ENCODE measurements at regions of chr17 and their contacts with region 1.

Region 1: GRCh38 chr17:2786176-2786881 is 9.9 kb upstream of the RAP1GAP2 start:
- DNase-seq: peak; percentile 94 to 95
- ATAC-seq: peak; percentile 89 to 97
- H3K4me3 ChIP-seq: peak overlapping the region; percentile 27
- H3K27ac ChIP-seq: peak overlapping the region; percentile 53; a peak in 4 of 6 replicates
- H3K4me1 ChIP-seq: no peaks in the 10 kb centered on the region
- CTCF ChIP-seq: peak; percentile 92
- EP300 ChIP-seq: no peak
- POLR2A ChIP-seq: no peak
- RAD21 ChIP-seq: peak; percentile 90 to 94

Region 2: DNA sequence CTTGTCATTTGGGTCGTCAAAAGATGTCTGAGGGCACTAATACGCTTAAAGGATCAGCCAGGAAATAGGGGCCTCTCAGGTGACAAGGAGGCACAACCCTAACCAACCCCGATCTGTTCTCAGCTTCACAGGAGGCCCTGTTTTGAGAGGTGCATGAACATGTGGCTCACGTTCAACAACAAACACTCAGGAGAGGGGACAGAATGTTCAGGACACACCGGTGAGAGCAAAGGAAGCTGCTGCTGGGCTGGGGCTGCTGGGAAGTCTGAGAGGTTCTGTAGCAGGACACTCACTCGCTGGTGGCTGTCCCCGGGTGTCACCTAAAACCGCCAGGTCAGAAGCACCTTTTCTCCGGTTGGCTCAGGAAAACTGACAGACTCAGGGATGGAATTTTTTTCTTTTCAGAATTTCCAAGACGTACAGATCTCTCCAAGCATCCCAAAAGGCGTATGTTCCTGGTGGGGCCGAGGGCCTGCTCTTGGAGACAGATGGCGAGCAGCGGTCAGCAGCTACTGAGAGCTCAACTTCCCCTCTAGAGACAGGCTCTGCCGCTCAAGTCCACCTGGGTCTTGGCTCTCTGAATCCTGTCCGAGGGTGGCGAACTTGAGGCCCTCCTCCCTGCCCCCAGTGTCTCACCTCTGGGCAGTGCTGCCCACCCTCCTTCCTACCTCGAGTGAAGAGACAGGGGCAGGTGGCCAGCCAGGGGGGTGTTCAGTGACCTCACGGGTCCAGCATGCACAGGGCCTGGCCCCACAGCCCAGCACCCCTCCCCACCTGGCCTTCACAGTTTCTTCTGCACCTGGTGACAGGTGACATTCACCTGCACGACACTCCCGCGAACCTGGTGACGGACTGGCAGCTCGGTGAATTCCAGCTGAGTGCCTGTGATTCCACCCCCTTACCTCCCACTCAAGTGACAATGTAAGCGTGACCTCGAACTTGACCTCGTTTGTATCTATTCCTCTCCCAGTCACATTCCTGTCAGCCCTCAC is 97.7 kb before region 1 on chr17:
- CTCF ChIA-PET with region 1: no interaction called
- POLR2A ChIA-PET with region 1: no interaction called
- DNase-seq: no peak
- ATAC-seq: peak; percentile 7 to 8; a peak in 5 of 6 replicates
- H3K4me3 ChIP-seq: no peak overlapping the region
- H3K27ac ChIP-seq: peak overlapping the region in 1 of 2 experiments; percentile 29; a peak in 1 of 6 replicates
- H3K4me1 ChIP-seq: peaks cover 9% of the 10 kb centered on the region
- CTCF ChIP-seq: no peak
- EP300 ChIP-seq: no peak
- POLR2A ChIP-seq: no peak
- RAD21 ChIP-seq: no peak

Region 3: DNA sequence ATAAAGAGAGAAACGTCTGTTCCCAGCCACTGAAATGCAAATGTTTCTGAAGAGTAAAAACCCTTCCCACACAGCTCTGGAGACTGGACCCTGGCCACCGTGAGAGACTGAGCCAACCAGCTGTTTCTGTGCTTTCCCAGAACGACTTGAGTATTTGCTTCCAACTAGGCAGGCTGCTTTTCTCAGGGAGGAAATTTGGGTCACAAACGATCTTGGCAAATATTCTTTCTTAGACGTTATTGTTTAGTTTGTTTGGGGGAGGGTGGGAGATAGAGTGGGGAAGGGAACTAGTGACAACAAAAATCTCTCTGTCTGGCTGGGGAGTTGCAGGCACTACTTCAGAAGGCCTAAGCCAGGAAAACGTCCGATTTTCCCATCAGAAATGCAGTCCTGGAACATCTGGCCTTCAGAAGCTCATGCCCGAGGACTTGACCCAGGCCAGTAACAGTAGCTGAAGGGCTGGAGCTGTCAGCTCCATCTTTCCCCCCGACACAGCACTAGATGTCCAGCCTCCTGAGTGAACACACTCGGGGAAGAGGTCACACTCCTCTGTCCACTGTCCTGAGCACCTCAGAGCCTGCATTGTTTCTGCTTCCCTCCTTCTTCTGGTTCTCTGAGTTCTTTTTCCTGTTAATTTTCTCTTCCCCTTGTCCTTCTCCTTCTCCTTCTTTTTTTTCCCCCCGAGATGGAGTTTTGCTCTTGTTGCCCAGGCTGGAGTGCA is 40.9 kb before region 1 on chr17:
- CTCF ChIA-PET with region 1: interaction called, 15 read pairs
- POLR2A ChIA-PET with region 1: no interaction called
- DNase-seq: no peak
- ATAC-seq: no peak
- H3K4me3 ChIP-seq: no peak overlapping the region
- H3K27ac ChIP-seq: no peak overlapping the region
- H3K4me1 ChIP-seq: peaks cover 4% of the 10 kb centered on the region; the same call in 2 of the 3 replicates
- CTCF ChIP-seq: no peak
- EP300 ChIP-seq: no peak
- POLR2A ChIP-seq: no peak
- RAD21 ChIP-seq: no peak

Region 4: DNA sequence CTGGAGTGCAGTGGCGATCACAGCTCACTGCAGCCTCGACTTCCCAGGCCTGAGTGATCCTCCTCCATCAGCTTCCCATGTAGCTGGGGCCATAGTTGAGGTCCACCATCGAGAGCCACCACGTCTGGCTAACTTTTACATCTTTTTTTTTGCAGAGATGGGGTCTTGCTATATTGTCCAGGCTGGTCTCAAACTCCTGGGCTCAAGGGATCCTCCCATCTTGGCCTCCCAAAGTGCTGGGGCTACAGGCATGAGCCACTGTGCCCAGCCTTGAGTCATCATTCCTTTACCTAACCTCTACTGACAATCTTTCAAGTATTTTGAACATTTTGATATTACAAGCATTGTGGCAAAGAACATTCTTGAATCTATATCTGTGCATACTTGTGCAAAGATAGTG is 27.5 kb before region 1 on chr17:
- CTCF ChIA-PET with region 1: interaction called, 11 read pairs
- POLR2A ChIA-PET with region 1: interaction called, 3 read pairs
- DNase-seq: no peak
- ATAC-seq: no peak
- H3K4me3 ChIP-seq: no peak overlapping the region
- H3K27ac ChIP-seq: no peak overlapping the region
- H3K4me1 ChIP-seq: peaks cover 11% of the 10 kb centered on the region; the same call in 2 of the 3 replicates
- CTCF ChIP-seq: no peak
- EP300 ChIP-seq: no peak
- POLR2A ChIP-seq: no peak
- RAD21 ChIP-seq: no peak

Region 5: DNA sequence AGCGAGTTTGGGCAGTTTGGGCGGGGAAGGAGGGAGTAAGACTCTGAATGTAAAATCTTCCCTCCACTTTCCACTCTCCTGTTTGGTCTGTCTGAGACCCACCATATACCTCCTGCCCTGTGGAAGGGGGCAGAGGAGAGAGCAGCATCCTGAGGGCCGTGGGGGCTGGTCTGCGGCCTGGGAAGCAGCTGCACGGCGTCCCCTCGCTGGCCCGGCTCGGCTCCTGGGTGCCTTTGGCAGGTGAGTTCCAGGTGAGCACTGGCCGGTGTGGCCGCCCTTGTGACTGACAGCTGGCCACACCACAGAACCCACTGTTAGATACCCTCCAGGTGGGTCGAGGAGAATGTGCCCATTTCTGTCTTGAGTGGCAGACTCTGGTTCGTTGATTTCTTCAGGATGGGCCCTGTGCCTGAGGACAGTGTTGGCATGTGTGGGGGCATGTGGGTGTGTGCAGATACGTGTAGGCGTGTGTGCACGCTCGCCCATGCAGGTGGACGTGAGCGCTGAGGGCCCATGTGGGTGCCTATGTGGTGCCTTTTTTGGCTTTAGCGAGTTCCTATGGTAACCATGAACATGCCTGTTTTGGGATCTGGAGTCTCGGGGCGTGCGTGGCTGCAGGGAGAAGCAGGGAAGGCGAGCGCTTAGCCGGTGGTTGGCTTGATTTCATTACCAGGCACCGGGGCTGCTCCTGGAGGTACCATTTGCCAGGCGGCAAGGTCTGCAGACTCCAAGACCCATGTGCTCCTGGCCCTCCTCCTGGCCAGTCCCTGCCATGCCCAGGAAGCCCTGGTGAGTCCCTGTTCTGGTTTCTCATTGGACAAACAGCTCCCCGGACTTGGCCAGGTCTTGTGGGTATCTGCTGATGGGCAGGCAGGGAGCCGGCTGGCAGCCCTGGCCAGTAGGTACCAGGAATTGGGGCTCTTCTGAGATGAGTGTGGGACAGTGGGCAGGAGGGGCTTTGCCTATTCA is 22.3 kb after region 1 on chr17:
- CTCF ChIA-PET with region 1: interaction called, 82 read pairs
- POLR2A ChIA-PET with region 1: no interaction called
- DNase-seq: no peak
- ATAC-seq: no peak
- H3K4me3 ChIP-seq: no peak overlapping the region
- H3K27ac ChIP-seq: no peak overlapping the region
- H3K4me1 ChIP-seq: peaks cover 16% of the 10 kb centered on the region; the same call in 2 of the 3 replicates
- CTCF ChIP-seq: no peak
- EP300 ChIP-seq: no peak
- POLR2A ChIP-seq: no peak
- RAD21 ChIP-seq: no peak

Region 6: DNA sequence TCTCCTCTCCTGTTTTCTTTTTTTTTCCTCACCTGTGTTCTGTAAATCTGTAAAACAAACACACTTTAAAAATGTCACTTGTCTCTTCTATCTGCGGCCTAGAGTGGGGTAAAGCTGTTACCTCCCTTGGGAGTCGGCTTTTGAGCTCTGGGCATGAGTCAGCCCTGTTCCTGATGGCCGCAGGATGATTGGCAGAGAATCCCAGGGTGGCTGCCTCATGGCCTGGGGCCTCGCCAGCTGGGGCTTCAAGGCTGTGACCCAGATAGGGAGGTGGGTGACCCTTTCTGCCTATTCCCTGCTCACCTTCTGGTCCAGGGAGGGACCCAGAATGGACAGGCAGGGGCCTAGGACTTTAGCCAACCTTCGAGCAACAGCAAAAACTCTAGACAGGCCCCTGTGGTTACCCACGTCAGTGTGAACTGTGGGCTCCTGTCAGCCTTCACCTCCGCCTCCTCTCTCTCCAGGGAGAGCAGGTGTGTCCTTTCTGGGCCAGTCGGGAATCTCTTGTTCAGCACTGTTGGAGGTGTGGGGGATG is 97.3 kb after region 1 on chr17:
- CTCF ChIA-PET with region 1: no interaction called
- POLR2A ChIA-PET with region 1: no interaction called
- DNase-seq: peak; percentile 71 to 84
- ATAC-seq: peak; percentile 91
- H3K4me3 ChIP-seq: no peak overlapping the region
- H3K27ac ChIP-seq: peak overlapping the region; percentile 59 to 77; a peak in 5 of 6 replicates
- H3K4me1 ChIP-seq: peaks cover 24% of the 10 kb centered on the region
- CTCF ChIP-seq: no peak
- EP300 ChIP-seq: no peak
- POLR2A ChIP-seq: no peak
- RAD21 ChIP-seq: no peak

Region 7: DNA sequence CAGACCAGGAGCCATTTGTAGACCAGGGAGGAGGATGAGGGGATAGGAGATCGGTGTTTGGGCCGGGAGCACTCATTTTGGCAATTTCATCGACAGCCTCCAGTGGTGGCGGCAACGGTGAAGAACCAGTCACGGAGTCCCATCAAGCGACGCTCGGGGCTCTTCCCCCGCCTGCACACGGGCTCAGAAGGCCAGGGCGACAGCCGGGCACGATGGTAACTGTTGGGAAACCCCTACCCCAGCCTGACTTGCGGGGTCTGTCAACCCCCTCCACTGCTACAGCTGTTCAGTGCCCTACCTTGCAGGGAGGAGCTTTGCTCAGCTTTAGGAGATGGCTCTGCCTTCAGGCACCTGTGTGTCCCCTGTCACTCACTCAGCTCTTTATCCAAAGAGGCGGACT is 234.1 kb after region 1 on chr17:
- CTCF ChIA-PET with region 1: interaction called, 17 read pairs
- POLR2A ChIA-PET with region 1: no interaction called
- DNase-seq: no peak
- ATAC-seq: no peak
- H3K4me3 ChIP-seq: no peak overlapping the region
- H3K27ac ChIP-seq: no peak overlapping the region
- H3K4me1 ChIP-seq: no peaks in the 10 kb centered on the region
- CTCF ChIP-seq: no peak
- EP300 ChIP-seq: no peak
- POLR2A ChIP-seq: no peak
- RAD21 ChIP-seq: no peak